A549 (cell line): ENCODE measurements at regions of chr5 and their contacts with region 1.

Region 1: GRCh38 chr5:169302491-169303118 is 1.7 kb upstream of the SLIT3 start:
- DNase-seq: peak; percentile 81 to 88
- ATAC-seq: peak in 1 of 2 experiments; percentile 54; a peak in 3 of 6 replicates
- H3K4me3 ChIP-seq: no peak overlapping the region
- H3K27ac ChIP-seq: peak overlapping the region; percentile 14 to 99; a peak in 4 of 6 replicates
- H3K4me1 ChIP-seq: peaks cover 38% of the 10 kb centered on the region
- CTCF ChIP-seq: peak; percentile 90
- EP300 ChIP-seq: no peak
- POLR2A ChIP-seq: no peak
- RAD21 ChIP-seq: peak; percentile 79 to 81

Region 2: DNA sequence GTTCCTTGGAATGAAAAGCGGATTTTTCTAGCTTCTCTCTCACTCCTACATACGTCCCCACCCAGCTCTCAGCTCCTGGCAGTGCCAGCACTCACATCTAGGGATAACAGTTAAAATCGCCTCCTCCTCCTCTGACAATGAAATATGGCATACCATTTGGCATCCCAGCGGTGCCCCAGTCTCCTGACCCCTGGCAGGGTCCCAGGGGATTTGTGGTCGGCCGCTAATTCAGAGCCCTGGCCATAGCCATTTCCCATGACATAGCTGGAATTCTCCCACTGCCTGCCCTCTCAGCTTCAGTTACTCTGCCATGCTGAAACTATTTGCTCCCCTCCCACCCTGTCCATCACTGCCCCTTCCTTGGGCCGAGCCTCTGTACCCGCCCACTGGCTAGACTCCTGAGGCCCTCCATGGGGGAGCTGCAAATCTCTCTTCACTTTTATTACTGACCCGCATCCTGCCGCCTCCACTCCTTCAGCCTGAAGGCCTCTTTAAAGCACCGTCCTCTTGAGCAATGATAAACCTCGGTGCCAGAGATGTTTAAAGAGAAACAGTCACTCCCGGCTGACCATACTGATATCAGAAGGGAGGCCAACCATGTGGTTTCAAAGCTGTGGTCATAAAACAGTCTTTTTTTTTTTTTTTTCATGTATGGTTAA is 141.5 kb before region 1 on chr5:
- CTCF ChIA-PET with region 1: interaction called, 16 read pairs
- POLR2A ChIA-PET with region 1: interaction called, 5 read pairs
- DNase-seq: peak; percentile 75 to 90
- ATAC-seq: peak; percentile 82 to 87
- H3K4me3 ChIP-seq: no peak overlapping the region
- H3K27ac ChIP-seq: peak overlapping the region; percentile 63 to 88
- H3K4me1 ChIP-seq: peaks cover 74% of the 10 kb centered on the region
- CTCF ChIP-seq: no peak
- EP300 ChIP-seq: no peak; a peak in 2 of 5 replicates
- POLR2A ChIP-seq: no peak
- RAD21 ChIP-seq: peak in 1 of 2 experiments; percentile 7; a peak in 2 of 5 replicates

Region 3: DNA sequence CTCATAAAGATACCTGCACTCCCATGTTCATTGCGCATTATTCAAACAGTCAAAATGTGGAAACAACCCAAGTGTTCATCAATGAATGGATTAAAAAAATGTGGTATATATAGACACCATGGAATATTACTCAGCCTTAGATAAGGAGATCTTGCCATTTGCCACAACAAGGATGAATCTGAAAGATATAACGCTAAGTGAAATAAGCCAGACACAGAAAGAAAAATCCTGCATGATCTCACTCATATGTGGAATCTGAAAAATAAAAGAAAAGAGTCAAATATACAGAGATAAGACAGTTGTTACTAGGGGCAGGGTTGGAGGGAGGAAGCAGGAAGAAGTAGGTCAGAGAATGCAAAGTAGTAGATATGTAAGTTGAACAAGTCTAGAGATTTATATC is 16.0 kb after region 1 on chr5:
- CTCF ChIA-PET with region 1: interaction called, 11 read pairs
- POLR2A ChIA-PET with region 1: no interaction called
- DNase-seq: no peak
- ATAC-seq: no peak
- H3K4me3 ChIP-seq: no peak overlapping the region
- H3K27ac ChIP-seq: no peak overlapping the region
- H3K4me1 ChIP-seq: no peaks in the 10 kb centered on the region
- CTCF ChIP-seq: no peak
- EP300 ChIP-seq: no peak
- POLR2A ChIP-seq: no peak
- RAD21 ChIP-seq: no peak

Region 4: GRCh38 chr5:169350759-169351240 is 48.2 kb after region 1 on chr5:
- CTCF ChIA-PET with region 1: interaction called, 19 read pairs
- POLR2A ChIA-PET with region 1: interaction called, 21 read pairs
- DNase-seq: peak; percentile 93 to 96
- ATAC-seq: peak; percentile 94 to 96
- H3K4me3 ChIP-seq: no peak overlapping the region
- H3K27ac ChIP-seq: peak overlapping the region; percentile 89 to 91
- H3K4me1 ChIP-seq: peaks cover 66% of the 10 kb centered on the region
- CTCF ChIP-seq: no peak
- EP300 ChIP-seq: peak; percentile 94 to 97; a peak in 4 of 5 replicates
- POLR2A ChIP-seq: no peak
- RAD21 ChIP-seq: peak; percentile 33 to 57; a peak in 4 of 5 replicates

Region 5: GRCh38 chr5:169390265-169390664 is 87.7 kb after region 1 on chr5:
- CTCF ChIA-PET with region 1: no interaction called
- POLR2A ChIA-PET with region 1: no interaction called
- DNase-seq: peak; percentile 10 to 13
- ATAC-seq: peak; percentile 83 to 84
- H3K4me3 ChIP-seq: no peak overlapping the region
- H3K27ac ChIP-seq: no peak overlapping the region
- H3K4me1 ChIP-seq: no peaks in the 10 kb centered on the region
- CTCF ChIP-seq: no peak
- EP300 ChIP-seq: no peak
- POLR2A ChIP-seq: no peak
- RAD21 ChIP-seq: no peak